Colonic mucosa (tissue), 4 donors: ENCODE measurements at regions of chr10 and their contacts with region 1.

Region 1: GRCh38 chr10:94320285-94320914 is 42.3 kb downstream of the NOC3L start:
- DNase-seq: peak; percentile 77
- H3K4me3 ChIP-seq: no peak overlapping the region
- H3K27ac ChIP-seq: no peak overlapping the region
- H3K4me1 ChIP-seq: no peaks in the 10 kb centered on the region
- H3K27me3 ChIP-seq: no peaks in the 10 kb centered on the region
- CTCF ChIP-seq: peak; percentile 92

Region 2: DNA sequence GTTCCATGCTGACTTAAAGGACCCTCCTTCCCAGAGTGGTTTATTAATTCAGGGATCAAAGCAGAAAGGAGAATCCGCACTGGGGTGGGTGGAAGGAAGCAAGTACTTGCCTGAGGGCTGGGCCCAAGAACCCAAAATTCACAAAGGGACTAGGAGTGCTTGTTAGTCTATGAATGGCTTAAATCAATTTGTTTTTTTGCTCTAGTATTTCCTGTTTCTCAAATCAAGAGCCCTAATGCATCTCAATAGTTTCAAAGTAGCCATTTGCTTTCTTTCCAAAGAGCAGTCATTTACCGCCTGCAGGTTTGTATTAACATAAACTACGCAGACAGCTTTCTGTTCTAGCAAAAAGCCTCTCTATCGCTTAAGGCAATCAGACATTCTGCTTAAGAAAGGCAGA is 470.8 kb before region 1 on chr10:
- intact Hi-C with region 1: no loop called
- DNase-seq: no peak
- H3K4me3 ChIP-seq: no peak overlapping the region
- H3K27ac ChIP-seq: no peak overlapping the region
- H3K4me1 ChIP-seq: no peaks in the 10 kb centered on the region
- H3K27me3 ChIP-seq: no peaks in the 10 kb centered on the region
- CTCF ChIP-seq: no peak

Region 3: DNA sequence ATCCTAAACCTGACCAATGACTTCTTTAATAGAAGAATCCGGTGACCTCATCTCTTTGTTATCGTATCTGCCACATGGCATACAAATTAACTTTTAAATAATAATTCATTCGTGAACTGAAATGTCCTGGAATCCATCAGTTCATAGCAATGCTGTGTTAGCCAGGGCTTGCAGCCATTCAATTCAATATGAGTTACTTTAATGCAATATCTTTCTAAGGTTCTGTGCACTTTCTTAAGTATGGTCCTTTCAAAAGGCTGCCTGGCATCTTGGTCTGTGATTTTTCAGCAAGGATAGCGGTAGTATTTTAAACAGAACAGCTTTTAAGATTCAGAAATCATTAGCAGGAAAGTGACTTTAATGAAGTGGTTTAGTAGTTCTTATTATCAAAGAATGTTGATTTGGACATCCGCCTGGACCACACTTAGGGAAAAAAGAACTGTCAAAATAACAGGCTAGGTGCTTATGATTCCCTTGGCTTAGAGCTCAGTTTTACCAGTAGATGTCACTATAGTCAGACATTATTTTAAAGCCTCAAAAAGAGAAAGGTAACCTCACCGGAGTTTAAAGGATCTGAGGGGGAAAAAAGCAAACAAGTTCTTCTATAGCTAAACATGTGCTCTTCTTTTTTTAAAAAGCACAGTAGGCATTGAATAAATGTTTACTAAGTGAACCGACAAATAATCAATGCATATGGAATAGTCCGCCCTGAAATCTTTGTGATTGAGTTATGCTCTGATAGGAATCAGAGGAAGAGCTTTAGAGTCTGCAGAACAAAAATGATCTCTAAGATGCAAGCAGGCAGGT is 403.9 kb before region 1 on chr10:
- intact Hi-C with region 1: loop called (anchors 5 kb)
- DNase-seq: no peak
- H3K4me3 ChIP-seq: peak overlapping the region; percentile 9
- H3K27ac ChIP-seq: no peak overlapping the region
- H3K4me1 ChIP-seq: no peaks in the 10 kb centered on the region
- H3K27me3 ChIP-seq: no peaks in the 10 kb centered on the region
- CTCF ChIP-seq: peak; percentile 38

Region 4: DNA sequence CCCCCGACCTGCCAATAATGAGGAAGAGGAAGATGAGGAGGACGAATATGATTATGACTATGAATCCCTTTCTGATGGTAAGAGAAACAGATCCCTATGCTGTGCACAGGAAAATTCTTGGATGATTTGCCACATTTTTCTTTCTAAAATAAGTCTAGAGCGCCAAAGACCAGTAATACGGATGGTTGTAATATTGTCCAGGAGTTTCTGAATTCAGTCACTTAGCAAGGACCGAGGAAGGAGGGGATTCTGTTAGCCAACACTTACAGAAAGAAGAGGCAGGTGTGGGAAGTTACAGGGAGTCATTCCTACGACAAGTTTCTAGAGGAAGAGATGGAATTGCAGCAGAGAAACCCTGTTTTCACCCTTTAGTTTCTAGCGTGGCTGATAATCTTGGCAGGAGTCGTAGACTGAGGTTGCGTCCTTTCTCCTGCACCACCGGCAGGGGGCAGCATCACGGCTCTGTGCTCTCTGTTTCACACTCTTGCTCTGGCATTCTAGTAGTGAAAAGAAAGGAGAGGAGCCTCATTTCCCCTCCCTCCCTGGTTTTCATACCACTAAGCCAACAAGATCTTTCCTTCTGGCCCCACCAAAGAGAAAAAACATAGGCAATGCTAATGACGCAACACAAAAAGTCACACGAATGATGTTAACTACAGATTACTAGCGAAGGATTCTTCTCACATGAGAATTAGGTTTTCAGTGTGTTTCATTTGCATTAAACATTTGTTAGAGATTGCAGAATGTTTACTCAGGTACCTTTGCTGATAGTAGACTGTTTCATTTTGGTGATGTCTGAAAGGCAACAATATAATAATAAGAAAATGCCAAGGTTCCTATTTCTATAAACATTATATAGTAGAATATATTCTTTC is 40.3 kb before region 1 on chr10:
- intact Hi-C with region 1: loop called (anchors 5 kb)
- DNase-seq: peak; percentile 27
- H3K4me3 ChIP-seq: no peak overlapping the region
- H3K27ac ChIP-seq: no peak overlapping the region
- H3K4me1 ChIP-seq: no peaks in the 10 kb centered on the region
- H3K27me3 ChIP-seq: no peaks in the 10 kb centered on the region
- CTCF ChIP-seq: peak; percentile 84